ENCODE measurements at regions of chrX and their contacts with region 1.

Region 1: GRCh38 chrX:121308276-121308805 is 260.9 kb downstream of the GLUD2 start:
- DNase-seq: peak; percentile 83
- H3K4me3 Mint-ChIP-seq: peak overlapping the region; percentile 32
- H3K27ac Mint-ChIP-seq: peak overlapping the region; percentile 77
- H3K4me1 Mint-ChIP-seq: peaks cover 23% of the 10 kb centered on the region
- H3K27me3 Mint-ChIP-seq: no peaks in the 10 kb centered on the region

Region 2: GRCh38 chrX:120244735-120245498 is 1063.4 kb before region 1 on chrX:
- CTCF ChIA-PET with region 1: no interaction called
- intact Hi-C with region 1: loop called (anchors 5 kb)
- DNase-seq: peak; percentile 75
- H3K4me3 Mint-ChIP-seq: peak overlapping the region; percentile 88
- H3K27ac Mint-ChIP-seq: peak overlapping the region; percentile 82
- H3K4me1 Mint-ChIP-seq: peaks cover 23% of the 10 kb centered on the region
- H3K27me3 Mint-ChIP-seq: no peaks in the 10 kb centered on the region

Region 3: DNA sequence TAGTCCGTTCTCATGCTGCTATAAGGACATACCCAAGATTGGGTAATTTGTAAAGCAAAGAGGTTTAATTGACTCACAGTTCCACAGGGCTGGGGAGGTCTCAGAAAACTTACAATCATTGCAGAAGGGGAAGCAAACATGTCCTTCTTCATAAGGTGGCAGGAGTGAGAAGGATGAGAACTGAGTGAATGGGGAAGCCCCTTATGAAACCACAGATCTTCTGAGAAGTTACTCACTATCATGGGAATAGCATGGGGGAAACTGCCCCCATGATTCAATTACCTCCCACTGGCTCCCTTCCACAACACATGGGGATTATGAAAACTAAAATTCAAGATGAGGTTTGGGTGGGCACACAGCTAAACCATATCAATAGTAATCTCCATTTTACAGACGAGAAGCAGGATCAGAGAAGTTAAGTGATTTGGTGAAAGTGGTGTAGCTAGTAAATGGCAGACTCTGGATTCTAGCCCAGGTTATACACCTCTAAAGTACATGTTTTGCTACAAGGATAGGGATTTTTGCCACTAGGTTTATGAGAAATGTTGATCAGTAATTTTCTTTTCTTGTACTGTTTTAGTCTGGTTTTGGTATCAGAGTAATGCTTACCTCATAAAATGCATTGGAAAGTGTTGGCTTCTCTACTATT is 631.2 kb before region 1 on chrX:
- CTCF ChIA-PET with region 1: no interaction called
- intact Hi-C with region 1: loop called (anchors 5 kb)
- DNase-seq: peak; percentile 35
- H3K4me3 Mint-ChIP-seq: no peak overlapping the region
- H3K27ac Mint-ChIP-seq: peak overlapping the region; percentile 85
- H3K4me1 Mint-ChIP-seq: peaks cover 31% of the 10 kb centered on the region
- H3K27me3 Mint-ChIP-seq: no peaks in the 10 kb centered on the region

Region 4: GRCh38 chrX:120736989-120737388 is 571.4 kb before region 1 on chrX:
- CTCF ChIA-PET with region 1: no interaction called
- intact Hi-C with region 1: loop called (anchors 1 kb)
- DNase-seq: peak; percentile 21
- H3K4me3 Mint-ChIP-seq: no peak overlapping the region
- H3K27ac Mint-ChIP-seq: peak overlapping the region; percentile 28
- H3K4me1 Mint-ChIP-seq: peaks cover 25% of the 10 kb centered on the region
- H3K27me3 Mint-ChIP-seq: no peaks in the 10 kb centered on the region

Region 5: DNA sequence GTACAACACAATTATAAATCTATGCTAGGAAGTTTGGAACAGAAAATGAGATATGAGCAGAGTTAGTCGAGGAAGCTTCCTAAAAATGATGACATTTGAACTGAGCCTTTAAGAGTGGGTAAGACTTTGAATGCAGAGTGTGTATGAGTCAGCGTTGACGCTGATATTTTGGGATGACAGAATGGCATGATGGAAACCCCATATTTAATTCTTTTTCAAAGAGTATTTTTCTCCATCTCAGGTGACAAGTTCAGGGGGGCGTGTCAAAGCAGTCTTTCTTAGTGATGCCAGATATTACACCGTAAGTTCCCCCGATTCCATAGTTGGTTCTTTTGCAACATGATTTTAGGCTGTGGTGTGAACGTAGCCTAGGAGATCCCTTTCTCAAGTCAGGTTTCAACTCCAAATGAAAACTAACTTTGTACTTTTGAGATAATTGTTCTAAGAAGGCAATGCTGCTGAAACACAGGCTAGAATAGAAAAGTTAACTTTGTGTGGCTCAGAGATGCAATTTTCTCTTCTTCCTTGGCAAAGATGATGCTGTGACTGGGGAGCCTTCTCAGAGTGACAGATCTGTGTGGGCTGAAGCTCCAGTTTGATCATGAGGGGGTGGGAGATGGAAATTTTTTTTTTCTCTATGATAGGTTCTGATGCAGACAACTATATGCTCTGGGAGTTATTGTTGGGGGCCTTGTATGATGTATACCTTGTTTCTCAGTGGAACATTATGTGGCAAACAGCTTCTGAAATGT is 201.7 kb before region 1 on chrX:
- CTCF ChIA-PET with region 1: no interaction called
- intact Hi-C with region 1: loop called (anchors 1 kb)
- DNase-seq: peak; percentile 22
- H3K4me3 Mint-ChIP-seq: no peak overlapping the region
- H3K27ac Mint-ChIP-seq: no peak overlapping the region
- H3K4me1 Mint-ChIP-seq: no peaks in the 10 kb centered on the region
- H3K27me3 Mint-ChIP-seq: no peaks in the 10 kb centered on the region

Region 6: DNA sequence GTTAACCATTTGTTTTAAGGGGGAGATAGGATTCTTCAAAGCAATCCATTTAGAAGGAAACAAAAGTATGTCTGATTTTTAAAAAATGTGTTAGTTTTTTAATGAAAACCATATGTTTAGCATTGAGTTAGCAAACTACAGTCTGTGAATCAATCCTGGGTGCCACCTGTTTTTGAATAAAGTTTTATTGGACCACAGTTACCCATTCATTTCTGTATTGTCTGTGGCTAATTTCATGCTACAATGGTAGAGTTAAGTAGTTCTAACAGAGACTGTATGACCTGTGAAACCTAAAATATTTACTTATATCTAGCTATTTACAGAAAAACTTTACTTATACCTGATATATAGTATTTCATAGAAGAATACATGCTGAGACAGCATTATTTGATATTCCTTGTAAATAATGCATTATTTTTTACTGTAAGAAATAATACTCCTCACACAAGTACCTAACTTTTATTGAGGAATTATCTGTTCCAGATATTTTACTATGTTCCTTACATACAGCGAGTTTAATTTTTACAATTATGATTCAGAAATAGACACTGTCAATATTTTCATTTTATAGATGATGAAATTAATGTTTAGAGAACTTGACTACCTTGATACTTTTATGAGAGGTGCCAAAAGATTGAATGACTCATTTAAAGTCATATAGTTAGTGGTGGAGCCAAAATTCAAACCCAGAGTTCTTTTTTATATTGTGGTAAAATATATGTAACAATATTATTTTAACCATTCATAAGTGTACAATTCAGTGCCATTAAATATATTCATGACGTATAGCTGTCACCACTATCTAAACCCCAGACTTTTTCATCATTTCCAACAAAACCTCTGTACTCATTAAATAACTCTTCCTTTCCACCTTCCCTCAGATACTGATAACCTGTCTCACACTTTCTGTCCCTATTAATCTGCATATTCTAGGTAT is 139.0 kb before region 1 on chrX:
- CTCF ChIA-PET with region 1: no interaction called
- intact Hi-C with region 1: loop called (anchors 2 kb)
- DNase-seq: no peak
- H3K4me3 Mint-ChIP-seq: no peak overlapping the region
- H3K27ac Mint-ChIP-seq: no peak overlapping the region
- H3K4me1 Mint-ChIP-seq: peaks cover 15% of the 10 kb centered on the region
- H3K27me3 Mint-ChIP-seq: no peaks in the 10 kb centered on the region

Region 7: DNA sequence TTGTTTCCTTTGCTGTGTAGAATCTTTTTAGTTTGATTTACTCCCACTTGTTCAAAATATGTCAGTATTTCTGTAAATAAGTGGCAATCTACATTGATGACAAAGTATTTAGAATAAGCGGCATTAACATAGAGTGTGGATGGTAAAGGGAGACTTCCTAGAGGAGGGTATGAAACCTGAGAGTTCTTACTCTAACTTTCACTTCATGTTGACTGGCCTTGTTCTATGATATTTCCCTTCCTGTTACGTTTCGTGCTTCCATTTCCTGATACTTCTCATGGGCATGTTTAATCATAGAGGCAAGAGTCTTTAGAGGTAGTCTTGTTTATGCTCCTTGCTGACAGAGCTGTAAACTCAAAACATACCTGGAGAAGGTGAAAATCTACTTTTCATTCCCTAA is 148.0 kb after region 1 on chrX:
- CTCF ChIA-PET with region 1: no interaction called
- intact Hi-C with region 1: loop called (anchors 1 kb)
- DNase-seq: no peak
- H3K4me3 Mint-ChIP-seq: no peak overlapping the region
- H3K27ac Mint-ChIP-seq: no peak overlapping the region
- H3K4me1 Mint-ChIP-seq: peaks cover 3% of the 10 kb centered on the region
- H3K27me3 Mint-ChIP-seq: no peaks in the 10 kb centered on the region

Region 8: DNA sequence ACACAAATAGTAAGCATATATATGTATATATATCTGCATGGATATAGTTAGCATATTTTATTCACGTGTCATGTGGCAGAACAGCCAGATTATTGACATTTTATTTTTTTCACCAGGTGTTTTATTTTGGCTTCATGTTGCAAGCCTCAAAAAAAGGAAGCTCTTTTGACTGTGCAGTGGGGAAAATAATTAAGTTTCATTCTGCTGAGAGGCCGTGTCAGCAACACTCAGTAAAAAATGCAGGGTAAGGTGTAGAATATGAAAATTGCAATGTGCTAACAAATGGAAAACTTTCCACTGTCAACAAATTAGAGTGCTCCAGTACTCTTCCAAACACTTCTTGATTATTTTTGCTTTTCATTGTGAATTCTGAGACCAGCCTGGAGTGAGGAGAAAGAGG is 250.5 kb after region 1 on chrX:
- CTCF ChIA-PET with region 1: no interaction called
- intact Hi-C with region 1: no loop called
- DNase-seq: no peak
- H3K4me3 Mint-ChIP-seq: no peak overlapping the region
- H3K27ac Mint-ChIP-seq: no peak overlapping the region
- H3K4me1 Mint-ChIP-seq: peaks cover 4% of the 10 kb centered on the region
- H3K27me3 Mint-ChIP-seq: peaks cover 2% of the 10 kb centered on the region

Measured in activated naive CD4-positive, alpha-beta T cell treated with anti-CD3 and anti-CD28 coated beads for 36 hours (primary cell).